HEK293T (cell line): ENCODE measurements at regions of chrX and their contacts with region 1.

Region 1: DNA sequence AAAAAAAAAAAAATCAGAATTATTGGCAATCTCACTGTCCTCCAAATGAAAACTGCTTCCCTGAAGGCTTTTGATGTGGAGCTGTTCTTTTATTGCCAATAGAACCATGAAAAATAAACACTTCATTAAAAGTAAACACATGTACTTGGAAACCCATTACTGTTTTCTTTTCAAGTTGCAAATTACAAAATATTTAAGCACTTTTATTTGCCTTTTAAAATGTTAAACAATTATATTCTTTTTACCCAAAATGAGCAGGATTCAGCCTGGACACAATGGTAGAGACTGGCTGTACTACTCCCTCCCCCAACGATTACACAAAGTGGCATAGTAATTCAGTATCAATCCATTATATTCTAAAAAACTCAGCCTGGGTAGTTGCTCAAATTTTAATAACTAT is 60.9 kb downstream of the SH2D1A start:
- DNase-seq: no peak

Region 2: GRCh38 chrX:125295337-125295736 is 888.1 kb after region 1 on chrX:
- CTCF ChIA-PET with region 1: interaction called, 14 read pairs
- POLR2A ChIA-PET with region 1: no interaction called
- DNase-seq: no peak